ENCODE measurements at regions of chr10 and their contacts with region 1.

Region 1: DNA sequence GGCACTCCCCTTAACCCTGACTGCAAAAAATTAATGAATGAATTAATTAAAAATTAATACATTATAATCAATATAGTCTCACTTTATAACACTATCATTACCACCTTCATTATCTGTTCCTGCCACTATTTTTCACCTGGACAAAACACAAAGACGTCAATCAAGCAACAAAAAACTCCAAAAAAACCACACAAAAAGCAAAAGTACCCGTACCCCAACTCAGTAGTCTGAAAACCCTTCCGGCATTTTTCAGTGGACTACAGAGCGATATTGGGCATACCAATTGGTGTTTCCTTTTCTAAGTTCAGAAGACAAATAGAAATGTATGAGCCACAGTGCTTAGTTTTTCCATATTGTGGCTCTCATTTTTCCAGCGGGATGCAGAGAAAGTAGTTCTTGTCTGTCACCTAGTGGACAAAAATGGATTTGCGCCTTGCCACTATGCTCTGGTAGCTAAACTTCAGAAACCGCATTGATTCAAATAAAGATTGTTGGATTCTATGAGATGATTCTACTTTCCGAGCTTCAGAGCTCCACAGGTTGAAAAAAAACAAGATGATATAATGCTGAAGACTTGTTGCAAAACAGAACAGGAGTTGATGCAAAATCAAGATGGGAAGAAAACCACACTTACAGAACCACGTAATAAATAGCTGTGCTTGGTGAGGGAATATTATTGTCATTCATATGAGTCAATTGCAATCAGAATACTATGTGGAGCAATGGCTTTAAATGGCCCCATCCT is 50.6 kb upstream of the ITGB1 start:
- DNase-seq: peak; percentile 74
- H3K4me3 ChIP-seq: no peak overlapping the region
- H3K27ac ChIP-seq: no peak overlapping the region
- H3K4me1 ChIP-seq: peaks cover 3% of the 10 kb centered on the region
- H3K27me3 ChIP-seq: no peaks in the 10 kb centered on the region
- CTCF ChIP-seq: peak; percentile 86 to 96 (median 94)
- POLR2A ChIP-seq: no peak

Region 2: DNA sequence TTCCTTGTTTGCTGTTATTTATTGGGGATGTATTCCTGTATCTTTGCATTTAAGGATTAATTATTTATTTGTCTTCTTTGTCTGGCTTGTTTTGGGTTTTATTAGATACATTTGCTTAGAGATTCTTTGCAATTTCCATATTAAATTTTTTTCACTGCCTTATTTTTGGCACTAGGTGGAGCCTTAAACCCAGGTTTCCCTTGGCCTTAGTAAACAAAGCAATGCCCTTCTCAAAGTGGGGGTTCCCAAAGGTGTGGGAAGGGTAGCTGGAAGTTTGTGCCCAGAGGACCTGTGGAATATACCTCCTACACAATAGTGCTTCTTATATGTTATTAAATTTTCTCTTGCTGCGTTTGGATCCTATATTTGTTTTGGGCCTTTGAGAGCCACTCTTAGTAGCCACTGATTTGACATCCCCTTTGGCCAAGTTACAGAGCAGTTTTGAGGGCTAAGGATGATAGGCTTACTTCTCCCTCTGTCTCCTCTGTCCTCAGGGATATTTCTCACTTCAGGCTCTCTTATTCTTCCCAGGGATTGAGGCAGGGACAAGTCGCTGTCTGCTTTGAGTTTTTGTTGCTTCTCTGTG is 213.0 kb before region 1 on chr10:
- intact Hi-C with region 1: loop called (anchors 1 kb)
- DNase-seq: peak; percentile 8
- H3K4me3 ChIP-seq: no peak overlapping the region
- H3K27ac ChIP-seq: no peak overlapping the region
- H3K4me1 ChIP-seq: no peaks in the 10 kb centered on the region
- H3K27me3 ChIP-seq: no peaks in the 10 kb centered on the region
- CTCF ChIP-seq: peak in 3 of 4 experiments; percentile 58 to 74 (median 72)
- POLR2A ChIP-seq: no peak